Left colon (tissue), 2 donors: ENCODE measurements at regions of chr21 and their contacts with region 1.

Region 1: GRCh38 chr21:41612674-41613532 is 104.9 kb upstream of the TMPRSS2 start:
- DNase-seq: peak; percentile 56 to 63
- ATAC-seq: peak; percentile 63

Region 2: GRCh38 chr21:41777951-41778874 is 165.3 kb after region 1 on chr21:
- intact Hi-C with region 1: loop called (anchors 5 to 10 kb)
- DNase-seq: peak; percentile 79 to 90
- ATAC-seq: peak; percentile 75